ENCODE measurements at regions of chr12 and their contacts with region 1.

Region 1: GRCh38 chr12:54958048-54958658 is 26.4 kb downstream of the TESPA1 start:
- DNase-seq: peak; percentile 79 to 84 (median 81)
- H3K4me3 ChIP-seq: no peak overlapping the region
- H3K27ac ChIP-seq: peak overlapping the region in 1 of 2 experiments; percentile 64
- H3K4me1 ChIP-seq: peaks cover 23 to 75% (median 37%) of the 10 kb centered on the region in 4 experiments
- H3K27me3 ChIP-seq: no peaks in the 10 kb centered on the region

Region 2: GRCh38 chr12:54701940-54702592 is 256.1 kb before region 1 on chr12:
- CTCF ChIA-PET with region 1: interaction called, 17 read pairs
- POLR2A ChIA-PET with region 1: no interaction called
- DNase-seq: peak; percentile 70 to 86 (median 80)
- H3K4me3 ChIP-seq: no peak overlapping the region
- H3K27ac ChIP-seq: no peak overlapping the region
- H3K4me1 ChIP-seq: peaks cover 2 to 5% (median 4%) of the 10 kb centered on the region in 4 experiments
- H3K27me3 ChIP-seq: no peaks in the 10 kb centered on the region

Region 3: DNA sequence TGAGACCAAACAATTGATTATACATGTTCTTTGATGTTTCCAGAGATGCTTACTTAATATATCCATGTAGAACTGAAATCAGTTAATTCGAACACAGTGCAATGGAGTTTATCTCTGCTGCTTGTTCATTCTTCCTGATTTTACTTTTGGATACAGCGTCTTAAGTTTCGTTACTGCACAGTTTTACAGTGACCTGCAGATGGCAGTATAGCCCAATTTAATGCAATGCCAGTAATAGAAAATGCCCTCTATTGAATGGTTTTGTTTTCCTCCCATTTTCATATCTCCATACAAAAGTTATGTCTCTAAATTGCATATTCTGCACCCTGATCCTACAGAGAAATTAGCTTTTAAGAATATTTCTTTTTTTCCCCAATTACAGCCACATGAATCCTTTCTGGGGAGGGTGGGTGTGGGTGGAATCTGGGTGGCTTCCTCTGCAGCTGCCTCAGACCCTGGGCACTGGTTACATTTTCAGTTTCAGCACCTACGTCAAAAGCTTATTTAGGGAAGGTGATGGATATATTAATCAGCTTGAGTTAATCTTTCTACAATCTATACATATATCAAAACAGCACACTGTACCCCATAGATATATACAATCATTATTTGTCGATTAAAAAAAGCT is 208.8 kb before region 1 on chr12:
- CTCF ChIA-PET with region 1: interaction called, 61 read pairs
- POLR2A ChIA-PET with region 1: no interaction called
- DNase-seq: peak; percentile 72 to 86 (median 80)
- H3K4me3 ChIP-seq: peak overlapping the region in 1 of 7 experiments; percentile 1
- H3K27ac ChIP-seq: no peak overlapping the region
- H3K4me1 ChIP-seq: peaks cover 6 to 12% (median 11%) of the 10 kb centered on the region in 4 experiments
- H3K27me3 ChIP-seq: no peaks in the 10 kb centered on the region

Region 4: DNA sequence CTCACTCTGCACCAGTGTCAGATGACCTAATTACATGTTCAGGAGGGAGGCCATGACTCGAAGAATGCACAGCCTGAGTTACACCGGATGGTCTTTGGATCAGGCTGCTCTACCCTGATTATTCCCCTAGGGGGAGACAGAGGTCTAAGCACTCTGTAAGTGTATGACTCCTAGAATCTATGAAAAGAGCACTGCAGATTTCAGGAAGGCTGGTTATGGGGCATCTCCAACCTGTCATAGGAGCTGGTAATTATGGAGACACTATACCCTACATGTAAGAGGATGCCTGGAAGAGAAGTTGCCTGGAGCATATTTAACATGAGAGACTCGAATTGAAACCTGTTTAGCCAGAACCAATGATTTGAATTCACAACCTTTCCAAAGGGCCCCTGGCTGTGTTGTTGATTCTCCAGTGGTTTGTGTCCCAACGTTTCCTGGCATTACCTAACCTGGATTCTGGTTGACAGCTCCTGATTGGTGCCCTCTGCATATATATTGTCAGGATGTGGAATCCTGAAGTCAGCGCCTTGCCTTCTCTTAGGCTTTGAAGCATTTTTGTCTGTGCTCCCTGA is 104.1 kb before region 1 on chr12 and contains the start of gene MUCL1:
- CTCF ChIA-PET with region 1: interaction called, 39 read pairs
- POLR2A ChIA-PET with region 1: no interaction called
- DNase-seq: peak; percentile 71 to 83 (median 74)
- H3K4me3 ChIP-seq: no peak within 1 kb of the TSS
- H3K27ac ChIP-seq: no peak within 1 kb of the TSS
- H3K4me1 ChIP-seq: no peaks in the 10 kb centered on the region
- H3K27me3 ChIP-seq: no peaks in the 10 kb centered on the region

Region 5: GRCh38 chr12:54993161-54993835 is 35.1 kb after region 1 on chr12:
- CTCF ChIA-PET with region 1: interaction called, 17 read pairs
- POLR2A ChIA-PET with region 1: no interaction called
- DNase-seq: peak; percentile 83 to 89 (median 85)
- H3K4me3 ChIP-seq: no peak overlapping the region
- H3K27ac ChIP-seq: no peak overlapping the region
- H3K4me1 ChIP-seq: peaks cover 17 to 52% (median 33%) of the 10 kb centered on the region in 4 experiments
- H3K27me3 ChIP-seq: no peaks in the 10 kb centered on the region

Region 6: GRCh38 chr12:55092579-55092978 is 134.4 kb after region 1 on chr12:
- CTCF ChIA-PET with region 1: no interaction called
- POLR2A ChIA-PET with region 1: no interaction called
- DNase-seq: no peak
- H3K4me3 ChIP-seq: no peak overlapping the region
- H3K27ac ChIP-seq: no peak overlapping the region
- H3K4me1 ChIP-seq: no peaks in the 10 kb centered on the region
- H3K27me3 ChIP-seq: peaks cover 0 to 7% (median 0%) of the 10 kb centered on the region in 5 experiments

Measured in common myeloid progenitor, CD34-positive (primary cell).